Activated CD8-positive, alpha-beta memory T cell treated with anti-CD3 and anti-CD28 coated beads, Interleukin-2, amount 10 ng/mL, durations not matched to agents 7 days and 5 days (primary cell): ENCODE measurements at regions of chr14 and their contacts with region 1.

Region 1: DNA sequence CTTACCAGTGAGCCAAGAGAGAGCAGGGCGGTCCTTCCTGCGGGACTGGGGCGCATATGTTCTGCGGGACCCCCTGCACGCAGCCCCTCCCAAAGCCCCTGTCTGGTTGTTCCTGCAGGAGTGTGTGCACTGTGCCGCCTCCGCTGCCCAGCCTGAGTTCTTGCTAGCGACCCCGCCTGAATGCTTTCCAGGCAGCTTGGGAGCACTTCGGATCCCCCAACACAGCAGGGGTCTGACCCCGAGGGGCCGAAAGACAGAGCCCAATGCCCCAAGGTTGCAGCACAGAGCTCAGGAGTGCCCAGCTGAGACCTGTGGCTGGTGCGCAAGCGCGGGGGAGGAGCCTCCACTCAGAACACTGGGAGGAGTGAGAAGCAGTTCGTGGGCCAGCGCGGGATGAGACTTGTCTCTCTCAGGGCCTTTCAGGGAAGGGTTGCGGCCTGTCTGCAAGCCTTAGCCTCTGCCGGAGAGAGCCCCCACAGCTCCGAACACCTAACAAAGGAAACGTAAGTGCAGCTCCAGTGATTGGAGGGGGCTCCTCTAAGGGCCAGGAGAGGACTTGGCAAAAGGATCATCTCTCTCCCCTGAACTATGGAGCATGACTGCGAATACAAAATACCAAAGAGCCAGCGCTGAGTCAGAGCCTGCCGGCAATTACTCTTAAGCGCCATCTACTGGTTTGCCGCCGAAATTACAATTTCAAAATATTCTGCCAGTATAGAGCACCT is 50.5 kb downstream of the GTF2A1 start:
- DNase-seq: peak; percentile 93
- ATAC-seq: peak; percentile 99
- H3K4me3 Mint-ChIP-seq: peak overlapping the region; percentile 90
- H3K27ac Mint-ChIP-seq: peak overlapping the region; percentile 95
- H3K4me1 Mint-ChIP-seq: peaks cover 36% of the 10 kb centered on the region
- H3K27me3 Mint-ChIP-seq: no peaks in the 10 kb centered on the region

Region 2: DNA sequence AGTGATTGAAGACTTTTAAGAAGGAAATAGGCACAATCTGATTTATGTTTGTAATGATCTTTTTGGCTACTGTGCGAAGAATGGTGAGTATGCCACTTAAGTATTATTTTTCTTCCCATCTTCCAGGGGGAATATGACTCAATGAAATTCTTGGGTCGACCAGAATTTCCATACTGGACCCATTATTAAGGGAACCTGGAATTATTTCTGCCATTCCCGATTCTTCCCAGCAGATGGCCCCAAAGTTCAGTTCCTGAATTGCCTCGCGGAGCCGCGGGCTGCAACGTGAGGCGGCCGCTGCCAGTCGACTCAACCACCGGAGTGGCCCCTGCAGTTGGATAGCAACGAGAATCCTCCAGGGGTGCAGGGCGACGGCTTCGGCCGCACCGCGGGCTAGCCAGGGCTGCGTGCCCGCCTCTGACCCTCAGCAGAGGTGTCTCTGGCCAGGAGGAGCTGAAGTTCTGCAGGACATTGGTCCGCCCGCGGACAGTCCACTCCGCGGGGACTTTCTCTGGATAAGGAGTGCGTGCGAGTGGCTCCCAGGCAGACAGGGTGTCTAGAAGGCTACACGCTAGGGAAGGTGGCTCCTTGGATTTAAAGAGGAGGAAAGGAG is 215.5 kb before region 1 on chr14:
- CTCF ChIA-PET with region 1: interaction called, 11 read pairs
- DNase-seq: peak; percentile 82
- ATAC-seq: peak; percentile 50
- H3K4me3 Mint-ChIP-seq: peak overlapping the region; percentile 72
- H3K27ac Mint-ChIP-seq: peak overlapping the region; percentile 70
- H3K4me1 Mint-ChIP-seq: peaks cover 43% of the 10 kb centered on the region
- H3K27me3 Mint-ChIP-seq: peaks cover 33% of the 10 kb centered on the region

Region 3: DNA sequence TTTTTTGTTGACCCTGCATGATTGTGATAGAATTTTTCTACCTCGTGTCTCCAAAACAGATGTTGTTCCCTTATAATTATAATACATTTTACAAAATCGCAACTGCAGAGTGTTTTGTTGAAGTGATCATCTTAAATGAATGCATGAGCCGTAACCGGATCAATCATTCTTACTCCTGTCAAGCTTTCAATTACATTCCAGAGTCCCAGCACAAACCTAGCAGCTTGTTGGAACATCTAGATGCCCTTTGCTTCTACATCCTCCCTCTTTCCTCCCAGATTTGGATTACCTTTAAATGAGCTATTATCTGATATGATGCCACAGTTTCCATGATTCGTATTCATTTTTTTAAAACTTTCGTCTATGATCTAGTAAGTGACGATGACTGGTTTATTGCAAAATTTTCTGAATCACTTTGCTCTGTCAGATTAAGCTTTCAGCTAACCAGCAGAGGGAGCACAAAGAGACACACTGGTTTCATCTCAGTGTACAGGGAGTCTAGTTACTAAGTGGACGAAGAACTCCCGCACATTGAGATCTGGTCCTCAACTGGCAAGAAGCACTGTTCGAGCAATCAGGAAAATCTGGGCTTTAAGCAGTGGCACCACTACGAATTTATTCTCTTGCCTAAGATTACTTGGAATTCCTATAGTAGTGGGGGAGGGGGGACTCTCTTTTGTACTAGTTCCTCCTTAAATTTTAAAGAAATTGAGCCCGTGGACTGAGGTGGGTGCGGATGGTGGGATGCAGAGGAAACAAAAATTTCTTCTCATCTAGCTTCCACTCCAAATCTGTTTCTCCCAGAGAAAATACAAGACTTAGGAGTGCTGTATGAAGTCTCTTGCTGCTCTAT is 174.0 kb before region 1 on chr14:
- CTCF ChIA-PET with region 1: interaction called, 20 read pairs
- DNase-seq: peak; percentile 47
- ATAC-seq: peak; percentile 69
- H3K4me3 Mint-ChIP-seq: no peak overlapping the region
- H3K27ac Mint-ChIP-seq: no peak overlapping the region
- H3K4me1 Mint-ChIP-seq: peaks cover 7% of the 10 kb centered on the region
- H3K27me3 Mint-ChIP-seq: peaks cover 55% of the 10 kb centered on the region

Region 4: DNA sequence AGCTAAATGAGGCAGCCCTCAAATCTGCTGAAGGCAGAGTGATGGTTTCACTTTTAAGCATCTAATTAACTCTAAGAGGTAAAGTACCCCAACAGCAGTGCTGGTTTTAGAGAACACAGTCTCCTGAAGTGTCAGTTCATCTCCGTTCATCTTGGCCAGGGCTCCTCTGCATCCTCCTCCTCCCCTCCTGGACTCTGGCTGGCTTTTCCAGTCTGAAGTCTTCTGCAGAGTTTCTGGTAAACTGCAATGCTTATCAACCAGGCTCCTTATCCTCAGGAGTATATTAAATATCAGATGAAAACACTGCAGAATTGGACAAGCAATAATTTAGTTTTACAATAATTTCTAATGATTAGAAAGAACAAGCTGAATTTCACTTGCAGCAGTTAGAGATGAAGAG is 64.9 kb before region 1 on chr14:
- CTCF ChIA-PET with region 1: no interaction called
- DNase-seq: no peak
- ATAC-seq: no peak
- H3K4me3 Mint-ChIP-seq: no peak overlapping the region
- H3K27ac Mint-ChIP-seq: no peak overlapping the region
- H3K4me1 Mint-ChIP-seq: no peaks in the 10 kb centered on the region
- H3K27me3 Mint-ChIP-seq: no peaks in the 10 kb centered on the region

Region 5: DNA sequence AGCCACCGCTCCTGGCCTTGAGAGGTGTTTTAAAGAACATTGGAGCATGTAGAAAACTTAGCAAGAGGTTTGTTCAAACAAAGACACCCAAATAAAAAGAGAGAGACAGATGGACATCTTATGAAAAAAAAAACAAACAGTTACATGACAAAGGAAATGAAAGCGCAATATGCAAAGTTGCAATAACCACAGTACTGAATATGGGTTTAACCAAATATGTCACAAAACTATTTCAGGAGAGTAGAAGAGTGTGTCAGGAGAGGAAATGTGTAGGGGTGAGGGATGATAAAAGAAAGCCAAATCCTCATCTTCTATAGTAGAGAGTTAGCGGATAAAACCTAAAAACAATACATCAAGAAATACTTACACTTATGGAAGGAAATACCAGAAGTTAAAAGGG is 47.9 kb before region 1 on chr14:
- CTCF ChIA-PET with region 1: no interaction called
- DNase-seq: no peak
- ATAC-seq: no peak
- H3K4me3 Mint-ChIP-seq: no peak overlapping the region
- H3K27ac Mint-ChIP-seq: no peak overlapping the region
- H3K4me1 Mint-ChIP-seq: peaks cover 5% of the 10 kb centered on the region
- H3K27me3 Mint-ChIP-seq: no peaks in the 10 kb centered on the region

Region 6: DNA sequence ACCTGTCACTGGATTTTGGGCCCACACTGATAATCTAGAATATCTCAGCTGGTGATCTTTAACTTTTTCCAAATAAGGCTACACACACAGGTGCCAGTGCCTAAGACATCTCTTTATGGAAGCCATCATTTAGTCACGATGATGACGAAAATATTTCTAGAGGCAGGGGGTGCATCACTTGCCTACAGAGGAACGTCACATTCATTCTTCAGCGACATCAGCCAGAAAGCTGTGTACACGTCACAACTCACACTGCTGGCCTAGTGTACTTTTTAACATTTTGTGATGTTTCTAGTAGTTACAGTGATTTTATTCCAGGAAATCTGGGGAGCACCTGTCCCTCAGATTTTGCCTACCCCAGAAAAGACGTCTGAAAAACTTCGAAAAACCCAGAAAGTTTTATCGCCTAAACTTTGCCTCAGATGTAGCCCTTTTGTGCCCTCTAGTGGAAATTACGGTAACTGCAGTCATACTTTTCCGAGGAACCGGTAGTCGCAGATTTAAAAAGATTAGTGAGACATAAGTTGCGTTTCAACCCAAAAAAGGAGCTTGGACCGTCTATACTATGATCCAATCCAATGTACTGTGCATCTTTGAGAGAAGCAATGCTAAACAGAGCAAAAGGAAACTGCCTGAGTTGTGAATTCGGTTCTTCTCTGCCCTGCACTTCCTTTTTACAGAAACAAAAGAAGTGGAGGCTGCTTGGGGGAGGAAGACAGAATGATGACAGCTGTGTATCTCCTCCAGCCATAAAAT is 294.2 kb after region 1 on chr14:
- CTCF ChIA-PET with region 1: interaction called, 13 read pairs
- DNase-seq: peak; percentile 71
- ATAC-seq: peak; percentile 84
- H3K4me3 Mint-ChIP-seq: peak overlapping the region; percentile 78
- H3K27ac Mint-ChIP-seq: peak overlapping the region; percentile 90
- H3K4me1 Mint-ChIP-seq: peaks cover 9% of the 10 kb centered on the region
- H3K27me3 Mint-ChIP-seq: no peaks in the 10 kb centered on the region